Left cardiac atrium (tissue), 4 donors: ENCODE measurements at regions of chr12 and their contacts with region 1.

Region 1: GRCh38 chr12:120775862-120776552 is 50.4 kb downstream of the ACADS start:
- DNase-seq: no peak
- ATAC-seq: peak; percentile 51 to 84

Region 2: GRCh38 chr12:120849765-120850164 is 73.8 kb after region 1 on chr12:
- intact Hi-C with region 1: loop called in 1 of 2 experiments (anchors 5 kb)
- DNase-seq: no peak
- ATAC-seq: peak; percentile 62 to 73

Region 3: GRCh38 chr12:120886199-120887018 is 110.4 kb after region 1 on chr12:
- intact Hi-C with region 1: no loop called
- DNase-seq: no peak
- ATAC-seq: peak in 1 of 2 donors; percentile 15